ENCODE measurements at regions of chr11 and their contacts with region 1.

Region 1: DNA sequence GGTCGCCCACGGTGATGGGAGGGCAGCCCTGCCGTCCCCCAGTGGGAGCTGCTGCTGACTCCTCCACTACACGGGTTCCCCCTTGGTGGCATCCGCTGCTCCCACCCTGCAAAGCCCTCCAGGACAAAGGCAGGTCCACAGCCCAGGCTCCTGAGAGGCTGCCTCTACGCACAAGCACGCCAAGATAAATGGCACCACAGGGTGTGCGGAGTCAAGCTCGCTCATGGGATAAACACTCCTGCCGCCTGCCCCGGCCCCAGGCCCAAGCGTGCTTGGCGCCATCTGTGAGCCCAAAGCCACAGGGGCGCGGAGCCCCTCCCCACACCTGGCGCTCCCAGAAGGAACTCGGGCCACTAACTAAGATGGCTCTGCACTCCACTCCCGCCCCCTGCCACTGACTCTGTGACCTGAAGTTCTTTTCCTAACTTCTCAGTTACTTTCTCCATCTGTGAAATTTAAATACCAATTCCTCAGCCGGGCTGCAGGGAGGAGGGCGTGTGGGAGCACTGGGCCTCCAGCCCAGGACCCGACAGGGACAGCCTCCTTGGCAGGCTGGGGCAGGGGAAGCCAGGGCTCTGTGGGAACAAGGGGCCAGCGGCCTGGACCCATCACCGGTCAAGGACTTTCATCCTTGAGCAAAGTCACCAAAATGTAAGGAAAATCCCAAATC is 14.9 kb downstream of the EHD1 start:
- DNase-seq: no peak
- H3K4me3 ChIP-seq: peak overlapping the region in 1 of 3 experiments; percentile 9
- H3K4me3 Mint-ChIP-seq: no peak overlapping the region
- H3K27ac ChIP-seq: peak overlapping the region; percentile 70 to 85
- H3K27ac Mint-ChIP-seq: peak overlapping the region in 4 of 7 donors; percentile 83 to 94 (median 92)
- H3K4me1 ChIP-seq: peaks cover 85 to 90% of the 10 kb centered on the region in 2 donors
- H3K4me1 Mint-ChIP-seq: peaks cover 90% of the 10 kb centered on the region
- H3K27me3 ChIP-seq: no peaks in the 10 kb centered on the region
- H3K27me3 Mint-ChIP-seq: peaks cover 0 to 6% (median 2%) of the 10 kb centered on the region in 3 donors
- CTCF ChIP-seq: no peak

Region 2: DNA sequence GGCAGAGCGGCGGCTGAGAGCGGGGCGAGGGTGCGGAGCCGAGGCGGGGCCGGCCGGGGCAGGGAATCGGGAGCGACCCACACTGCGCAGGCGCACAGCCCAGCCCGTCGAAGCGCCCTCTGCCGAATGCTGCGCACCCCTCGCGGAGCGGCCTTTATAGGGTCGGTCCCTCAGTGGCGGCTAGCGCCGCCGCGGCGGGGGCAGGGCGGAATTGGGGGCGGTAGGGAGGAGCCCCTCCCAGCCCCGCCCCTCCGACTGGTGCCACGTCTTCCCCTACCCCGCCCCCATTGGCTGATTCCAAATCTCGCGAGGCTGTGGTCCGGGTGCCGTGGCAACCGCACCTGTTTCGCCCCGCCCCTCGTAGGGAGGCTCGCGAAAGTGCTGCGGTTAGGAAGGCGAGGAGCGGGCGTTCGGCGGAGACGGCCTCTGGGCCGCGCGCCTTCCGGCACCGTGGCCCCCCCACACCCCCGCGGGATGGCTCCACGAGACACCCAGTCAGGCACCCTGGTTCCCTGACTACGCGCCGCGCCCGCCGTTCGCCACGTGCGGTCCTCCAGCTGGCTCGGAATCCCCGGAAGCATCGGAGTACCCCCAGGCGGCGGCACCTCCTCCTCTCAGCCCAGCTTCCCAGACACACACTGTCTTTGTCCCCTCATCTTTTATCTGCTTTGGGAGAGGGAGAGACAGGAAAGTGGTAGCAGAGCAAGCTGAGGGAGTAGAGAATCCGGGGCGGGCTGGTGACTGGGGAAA is 15.1 kb after region 1 on chr11 and contains the start of gene EHD1:
- intact Hi-C with region 1: loop called in 1 of 2 experiments (anchors 2 kb)
- DNase-seq: peak; percentile 98 to 99 (median 99)
- H3K4me3 ChIP-seq: peak within 1 kb of the TSS; percentile 72 to 100 (median 92)
- H3K4me3 Mint-ChIP-seq: peak within 1 kb of the TSS; percentile 96 to 100
- H3K27ac ChIP-seq: peak within 1 kb of the TSS; percentile 98 to 100
- H3K27ac Mint-ChIP-seq: peak within 1 kb of the TSS; percentile 99 to 100 (median 100)
- H3K4me1 ChIP-seq: peaks cover 64 to 69% of the 10 kb centered on the region in 2 donors
- H3K4me1 Mint-ChIP-seq: peaks cover 61% of the 10 kb centered on the region
- H3K27me3 ChIP-seq: peaks cover 0 to 7% of the 10 kb centered on the region in 2 donors
- H3K27me3 Mint-ChIP-seq: peaks cover 0 to 20% (median 9%) of the 10 kb centered on the region in 3 donors
- CTCF ChIP-seq: peak; percentile 28
- polyA plus RNA-seq, gene EHD1: 30.3 to 212 (median 48.4) TPM

Region 3: GRCh38 chr11:64969209-64969608 is 105.7 kb after region 1 on chr11:
- intact Hi-C with region 1: no loop called
- DNase-seq: no peak
- H3K4me3 ChIP-seq: no peak overlapping the region
- H3K4me3 Mint-ChIP-seq: no peak overlapping the region
- H3K27ac ChIP-seq: no peak overlapping the region
- H3K27ac Mint-ChIP-seq: no peak overlapping the region
- H3K4me1 ChIP-seq: peaks cover 17 to 22% of the 10 kb centered on the region in 2 donors
- H3K4me1 Mint-ChIP-seq: peaks cover 22% of the 10 kb centered on the region
- H3K27me3 ChIP-seq: peaks cover 2 to 24% of the 10 kb centered on the region in 2 donors
- H3K27me3 Mint-ChIP-seq: peaks cover 26 to 42% (median 35%) of the 10 kb centered on the region in 3 donors
- CTCF ChIP-seq: no peak

Measured in CD14-positive monocyte (primary cell).